Activated T-helper 2 cell treated with anti-CD3 and anti-CD28 coated beads, Interferon-gamma antibody, Interleukin-2, Interleukin-4, amounts not matched to agents 10 μg/mL and 5 μg/mL and 100 μg/mL, durations not matched to agents 14 hours and 24 hours and 36 hours (primary cell): ENCODE measurements at regions of chr20 and their contacts with region 1.

Region 1: GRCh38 chr20:478949-479429 is 16.7 kb upstream of the TBC1D20 start:
- DNase-seq: no peak
- H3K4me3 Mint-ChIP-seq: no peak overlapping the region
- H3K27ac Mint-ChIP-seq: no peak overlapping the region
- H3K4me1 Mint-ChIP-seq: peaks cover 13% of the 10 kb centered on the region
- H3K27me3 Mint-ChIP-seq: no peaks in the 10 kb centered on the region

Region 2: GRCh38 chr20:396619-397431 is 82.2 kb before region 1 on chr20:
- intact Hi-C with region 1: no loop called
- DNase-seq: no peak
- H3K4me3 Mint-ChIP-seq: no peak overlapping the region
- H3K27ac Mint-ChIP-seq: no peak overlapping the region
- H3K4me1 Mint-ChIP-seq: peaks cover 15% of the 10 kb centered on the region
- H3K27me3 Mint-ChIP-seq: no peaks in the 10 kb centered on the region

Region 3: GRCh38 chr20:462199-462991 is 16.6 kb before region 1 on chr20 and contains the start of gene TBC1D20:
- intact Hi-C with region 1: loop called (anchors 2 kb)
- DNase-seq: peak; percentile 80
- H3K4me3 Mint-ChIP-seq: peak within 1 kb of the TSS; percentile 96
- H3K27ac Mint-ChIP-seq: peak within 1 kb of the TSS; percentile 89
- H3K4me1 Mint-ChIP-seq: peaks cover 42% of the 10 kb centered on the region
- H3K27me3 Mint-ChIP-seq: peaks cover 5% of the 10 kb centered on the region
- total RNA-seq, gene TBC1D20: 30.1 and 31.5 TPM in 2 replicates